ENCODE measurements at regions of chr15 and their contacts with region 1.

Region 1: DNA sequence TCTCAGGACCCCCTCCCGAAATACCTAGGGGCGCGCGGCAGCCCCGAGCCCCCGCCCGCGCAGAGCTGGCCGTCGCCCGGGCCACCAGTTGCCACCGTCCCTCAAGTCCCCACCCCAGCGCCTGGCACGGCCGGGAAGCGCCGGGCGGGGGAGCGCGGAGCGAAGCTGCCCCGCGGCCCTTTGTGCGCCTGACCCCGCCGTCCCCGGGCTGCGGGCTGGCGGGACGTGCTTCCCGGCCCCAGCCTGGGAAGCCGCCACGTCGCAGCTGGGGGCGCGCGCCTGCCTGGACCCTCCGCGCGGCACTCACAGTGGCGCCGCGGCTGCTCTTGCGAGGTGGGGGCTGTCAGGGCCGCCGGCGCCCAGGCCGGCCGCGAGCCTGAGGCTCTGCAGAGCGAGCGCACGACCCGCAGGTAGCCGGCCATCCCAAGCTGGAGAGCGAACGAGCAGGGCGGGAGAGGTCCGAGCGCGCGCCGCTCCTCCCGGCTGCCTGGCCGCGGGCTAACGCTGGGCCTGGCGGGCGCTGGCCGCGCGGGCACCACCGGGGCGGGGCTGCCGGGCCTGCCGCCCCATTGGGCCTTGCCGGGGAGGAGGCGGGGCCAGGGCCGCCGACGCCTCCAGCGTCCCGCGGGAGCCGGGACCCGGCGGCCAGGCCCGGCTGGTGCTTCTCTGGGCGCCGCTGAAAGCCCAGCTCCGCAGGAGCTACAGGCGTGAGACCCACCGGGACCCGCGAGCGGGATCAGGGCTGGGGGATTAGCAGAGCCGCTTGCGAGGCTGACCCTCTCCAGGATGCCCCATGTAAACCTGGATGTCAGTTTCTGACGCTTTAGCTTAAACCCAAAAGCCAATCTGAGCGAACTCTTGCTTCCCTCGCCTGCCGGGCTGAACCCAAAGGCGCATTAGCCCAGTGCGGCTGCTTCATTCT is at the start of gene IDH2:
- DNase-seq: peak; percentile 59 to 84
- H3K4me3 ChIP-seq: peak within 1 kb of the TSS; percentile 80
- H3K27ac ChIP-seq: no peak within 1 kb of the TSS
- H3K4me1 ChIP-seq: peaks cover 89% of the 10 kb centered on the region
- H3K27me3 ChIP-seq: no peaks in the 10 kb centered on the region
- CTCF ChIP-seq: no peak
- total RNA-seq, gene IDH2: 87.9 and 96.7 TPM in 2 replicates

Region 2: GRCh38 chr15:90071208-90071807 is 30.9 kb before region 1 on chr15:
- CTCF ChIA-PET with region 1: no interaction called
- POLR2A ChIA-PET with region 1: no interaction called
- intact Hi-C with region 1: no loop called
- DNase-seq: peak; percentile 54 to 65
- H3K4me3 ChIP-seq: no peak overlapping the region
- H3K27ac ChIP-seq: no peak overlapping the region
- H3K4me1 ChIP-seq: no peaks in the 10 kb centered on the region
- H3K27me3 ChIP-seq: no peaks in the 10 kb centered on the region
- CTCF ChIP-seq: peak; percentile 79

Region 3: DNA sequence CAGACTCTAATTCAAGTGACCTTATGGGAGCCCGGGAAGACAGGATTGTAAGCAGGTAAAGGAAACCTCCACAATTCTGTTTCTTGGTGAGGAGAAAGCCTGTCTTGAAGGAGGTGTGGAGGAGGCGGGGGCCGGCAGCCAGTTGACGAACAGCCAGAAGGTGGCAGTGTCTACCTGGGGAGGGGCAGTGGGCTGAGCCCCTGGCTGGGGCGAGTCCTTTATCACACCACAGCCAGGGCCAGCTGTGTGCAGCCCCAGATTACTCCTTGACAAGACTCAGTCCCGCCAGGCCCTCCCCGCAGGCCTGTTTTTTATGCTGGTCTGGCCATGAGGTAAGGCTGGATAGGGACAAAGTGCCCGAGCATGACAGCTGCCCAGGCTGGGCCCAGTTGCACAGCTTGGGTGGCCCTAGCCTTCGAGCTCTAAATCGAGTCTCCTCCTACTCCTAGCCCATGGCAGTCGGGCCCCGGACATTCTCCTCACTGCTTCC is 41.0 kb after region 1 on chr15:
- CTCF ChIA-PET with region 1: interaction called, 5 read pairs
- POLR2A ChIA-PET with region 1: no interaction called
- intact Hi-C with region 1: loop called (anchors 5 kb)
- DNase-seq: peak; percentile 61 to 79
- H3K4me3 ChIP-seq: no peak overlapping the region
- H3K27ac ChIP-seq: no peak overlapping the region
- H3K4me1 ChIP-seq: no peaks in the 10 kb centered on the region; the same call in 1 of the 2 replicates
- H3K27me3 ChIP-seq: no peaks in the 10 kb centered on the region
- CTCF ChIP-seq: peak; percentile 86

Region 4: DNA sequence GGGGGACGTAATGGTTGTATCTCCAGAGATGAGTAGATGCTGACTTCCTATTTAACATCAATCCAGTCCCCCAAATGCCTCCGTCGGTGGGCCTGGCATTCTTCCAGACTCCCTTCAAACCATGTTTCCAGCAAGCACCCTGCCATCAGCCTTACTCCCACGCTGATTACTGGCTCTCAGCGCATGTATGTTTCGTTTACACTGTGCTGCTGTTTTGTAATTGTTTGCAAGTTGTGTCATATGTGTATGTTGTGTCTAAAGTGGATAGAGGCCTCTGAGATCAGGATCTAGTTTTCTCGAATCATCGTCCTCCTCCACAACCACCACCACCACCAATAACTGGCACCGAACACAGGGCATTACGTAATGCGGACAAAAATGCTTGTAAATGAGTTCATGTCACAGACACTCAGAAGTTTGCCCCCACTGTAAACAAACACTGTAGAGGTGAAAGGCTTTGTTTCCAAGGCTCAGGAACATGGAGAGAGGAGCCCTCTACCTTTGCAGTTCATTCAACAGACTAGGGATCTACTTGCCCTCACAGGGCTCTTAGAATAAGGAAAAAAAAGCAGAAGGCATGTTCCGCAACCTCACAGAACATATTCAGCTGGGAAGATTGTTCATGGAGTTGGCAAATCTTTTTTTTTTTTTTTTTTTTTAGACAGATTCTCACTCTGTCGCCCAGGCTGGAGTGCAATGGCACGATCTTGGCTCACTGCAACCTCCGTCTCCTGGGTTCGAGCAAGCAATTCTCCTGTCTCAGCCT is 52.8 kb after region 1 on chr15:
- CTCF ChIA-PET with region 1: no interaction called
- POLR2A ChIA-PET with region 1: no interaction called
- intact Hi-C with region 1: loop called (anchors 5 kb)
- DNase-seq: peak in 1 of 2 experiments; percentile 81
- H3K4me3 ChIP-seq: no peak overlapping the region
- H3K27ac ChIP-seq: no peak overlapping the region
- H3K4me1 ChIP-seq: peaks cover 48% of the 10 kb centered on the region
- H3K27me3 ChIP-seq: no peaks in the 10 kb centered on the region
- CTCF ChIP-seq: no peak

Region 5: DNA sequence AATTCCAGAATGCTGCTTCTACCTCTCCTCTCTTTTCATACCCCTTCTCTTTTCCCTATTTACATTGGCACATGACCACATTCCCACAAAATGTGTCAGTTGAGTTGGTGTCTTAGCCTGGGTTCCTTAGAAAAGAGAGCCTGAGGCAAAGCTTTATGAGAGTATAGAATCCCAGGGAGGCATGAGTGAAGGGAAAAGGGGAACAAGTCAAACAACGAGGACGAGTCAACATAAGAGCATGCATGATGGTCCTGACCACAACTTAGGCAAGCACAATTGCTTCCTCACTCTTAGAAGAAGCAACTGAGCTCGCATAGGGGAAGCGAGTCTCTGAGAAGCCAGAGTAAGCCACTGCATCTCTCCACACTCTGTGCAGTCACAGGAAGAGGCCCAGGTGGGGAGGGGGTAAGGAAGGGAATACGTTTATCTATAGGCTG is 234.5 kb after region 1 on chr15:
- CTCF ChIA-PET with region 1: no interaction called
- POLR2A ChIA-PET with region 1: interaction called, 23 read pairs
- intact Hi-C with region 1: no loop called
- DNase-seq: peak in 1 of 2 experiments; percentile 96
- H3K4me3 ChIP-seq: no peak overlapping the region
- H3K27ac ChIP-seq: peak overlapping the region; percentile 74
- H3K4me1 ChIP-seq: peaks cover 45% of the 10 kb centered on the region
- H3K27me3 ChIP-seq: no peaks in the 10 kb centered on the region
- CTCF ChIP-seq: no peak

Measured in PC-9 (cell line).